Activated CD4-positive, alpha-beta T cell treated with anti-CD3 and anti-CD28 coated beads for 36 hours (primary cell): ENCODE measurements at regions of chr2 and their contacts with region 1.

Region 1: GRCh38 chr2:96265840-96266679 is at the starts of genes CIAO1 and TMEM127:
- DNase-seq: peak; percentile 99
- ATAC-seq: peak; percentile 94
- H3K4me3 Mint-ChIP-seq: peak within 1 kb of the TSS; percentile 99
- H3K27ac Mint-ChIP-seq: peak within 1 kb of the TSS; percentile 99
- H3K4me1 Mint-ChIP-seq: peaks cover 57% of the 10 kb centered on the region
- H3K27me3 Mint-ChIP-seq: no peaks in the 10 kb centered on the region
- total RNA-seq, gene CIAO1: 72.1 to 77.6 TPM
- total RNA-seq, gene TMEM127: 16.6 to 17.9 TPM

Region 2: GRCh38 chr2:96145036-96145847 is 120.8 kb before region 1 on chr2 and contains the start of gene DUSP2:
- CTCF ChIA-PET with region 1: interaction called, 4 read pairs
- POLR2A ChIA-PET with region 1: no interaction called
- intact Hi-C with region 1: loop called (anchors 1 to 2 kb)
- DNase-seq: peak; percentile 97
- ATAC-seq: peak; percentile 45
- H3K4me3 Mint-ChIP-seq: peak within 1 kb of the TSS; percentile 97
- H3K27ac Mint-ChIP-seq: peak within 1 kb of the TSS; percentile 99
- H3K4me1 Mint-ChIP-seq: peaks cover 57% of the 10 kb centered on the region
- H3K27me3 Mint-ChIP-seq: no peaks in the 10 kb centered on the region
- total RNA-seq, gene DUSP2: 248 to 407 TPM

Region 3: DNA sequence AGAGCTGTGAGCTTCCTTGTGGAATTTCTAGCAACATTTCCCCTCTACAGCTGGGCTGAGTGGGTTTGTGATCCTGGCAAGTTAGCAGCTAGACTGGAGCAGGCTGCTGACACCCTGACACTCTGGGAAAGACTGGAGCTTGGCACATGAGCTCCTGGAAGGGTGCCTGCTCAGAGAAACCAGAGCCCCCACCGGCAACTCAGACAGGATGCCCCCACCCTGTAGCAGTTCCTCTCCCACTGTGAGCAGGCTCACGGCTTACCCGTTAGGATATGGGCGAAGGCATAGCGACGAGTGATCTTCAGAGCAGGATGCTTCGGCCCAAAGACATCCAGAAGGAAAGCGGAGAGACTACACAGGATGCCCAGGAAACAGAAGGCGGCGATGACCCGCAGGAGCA is 11.5 kb before region 1 on chr2:
- CTCF ChIA-PET with region 1: interaction called, 12 read pairs
- POLR2A ChIA-PET with region 1: interaction called, 3 read pairs
- intact Hi-C with region 1: no loop called
- DNase-seq: no peak
- ATAC-seq: no peak
- H3K4me3 Mint-ChIP-seq: no peak overlapping the region
- H3K27ac Mint-ChIP-seq: peak overlapping the region; percentile 29
- H3K4me1 Mint-ChIP-seq: peaks cover 42% of the 10 kb centered on the region
- H3K27me3 Mint-ChIP-seq: no peaks in the 10 kb centered on the region

Region 4: DNA sequence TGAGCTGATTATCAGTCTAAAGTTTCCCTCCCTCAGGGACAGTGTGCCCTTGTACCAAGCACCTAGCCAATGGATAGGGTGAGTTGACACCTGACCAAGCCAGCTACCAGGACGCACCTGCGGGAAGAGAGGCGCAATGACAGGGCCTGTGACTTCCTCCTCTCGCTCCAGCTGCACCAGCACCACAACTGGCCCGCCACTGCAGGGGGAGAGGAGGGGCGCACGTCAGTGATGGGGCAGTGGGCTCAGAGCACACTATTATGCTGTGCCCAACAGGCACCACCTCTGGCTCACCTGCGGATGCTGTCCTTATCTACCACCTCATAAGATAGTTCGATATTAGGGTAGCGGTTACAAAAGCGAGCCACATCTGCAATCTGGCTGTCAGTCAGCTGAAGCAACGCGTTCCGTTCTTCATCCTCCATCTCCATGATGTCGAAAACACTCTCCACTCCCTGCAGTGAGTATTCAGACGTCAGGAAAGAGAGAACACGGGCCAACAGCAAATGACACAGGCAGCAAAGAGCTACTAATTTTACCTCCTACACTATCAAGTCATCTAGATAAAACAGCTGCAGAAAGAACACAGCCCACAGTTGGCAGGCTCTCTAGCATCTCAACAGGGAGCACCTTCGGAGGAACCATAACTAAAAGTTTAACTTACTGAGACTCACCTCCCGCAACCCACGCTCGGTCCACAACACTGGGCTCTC is 10.9 kb after region 1 on chr2:
- CTCF ChIA-PET with region 1: no interaction called
- POLR2A ChIA-PET with region 1: no interaction called
- intact Hi-C with region 1: no loop called
- DNase-seq: no peak
- ATAC-seq: no peak
- H3K4me3 Mint-ChIP-seq: no peak overlapping the region
- H3K27ac Mint-ChIP-seq: no peak overlapping the region
- H3K4me1 Mint-ChIP-seq: no peaks in the 10 kb centered on the region
- H3K27me3 Mint-ChIP-seq: no peaks in the 10 kb centered on the region

Region 5: DNA sequence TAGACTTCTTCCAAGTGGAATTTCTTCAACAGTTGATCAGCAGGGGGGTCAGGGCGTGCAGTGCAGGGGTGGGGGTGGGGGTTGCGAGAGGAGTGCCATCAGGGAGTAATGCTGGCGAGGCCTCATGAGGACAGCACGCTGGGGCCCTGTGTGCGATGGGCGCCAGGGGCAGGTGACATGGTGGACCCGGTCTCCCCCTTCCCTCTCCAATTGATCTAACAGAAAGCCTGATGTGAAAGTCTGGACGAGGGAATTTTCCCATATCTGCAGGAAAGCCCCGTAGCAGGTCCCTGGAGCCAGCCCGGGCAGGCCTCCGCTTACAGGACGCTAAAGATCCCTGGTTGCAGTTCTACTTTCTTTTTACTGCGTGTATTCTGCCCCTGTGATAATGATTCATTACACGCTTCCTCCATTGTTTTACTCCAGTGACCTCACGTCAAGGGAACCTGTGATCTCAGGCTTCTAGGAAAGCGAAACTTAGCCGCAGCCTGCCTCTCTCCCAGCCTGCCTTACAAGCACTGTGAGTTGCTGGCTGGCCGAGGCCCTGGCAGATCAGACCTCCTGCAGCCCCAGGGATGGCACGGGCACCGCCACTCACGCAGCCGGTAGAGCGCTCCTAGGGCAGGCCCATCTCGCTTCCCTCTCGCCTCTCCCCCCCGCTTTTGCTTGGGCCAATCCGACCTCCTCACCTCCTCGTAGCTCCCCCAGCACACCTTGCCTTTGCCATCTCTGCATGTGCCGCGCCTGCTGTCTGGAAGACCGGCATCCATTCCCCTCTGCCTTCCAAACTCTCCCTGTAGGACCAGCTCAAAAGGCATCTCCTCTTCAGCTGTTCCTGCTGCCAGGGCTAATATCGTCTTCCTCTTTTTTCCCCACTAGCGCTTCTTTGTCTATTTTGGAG is 219.9 kb after region 1 on chr2:
- CTCF ChIA-PET with region 1: no interaction called
- POLR2A ChIA-PET with region 1: no interaction called
- intact Hi-C with region 1: loop called in 1 of 2 experiments (anchors 2 kb)
- DNase-seq: peak; percentile 94
- ATAC-seq: peak; percentile 95
- H3K4me3 Mint-ChIP-seq: peak overlapping the region; percentile 90
- H3K27ac Mint-ChIP-seq: peak overlapping the region; percentile 95
- H3K4me1 Mint-ChIP-seq: peaks cover 48% of the 10 kb centered on the region
- H3K27me3 Mint-ChIP-seq: no peaks in the 10 kb centered on the region

Region 6: GRCh38 chr2:96565111-96565510 is 299.1 kb after region 1 on chr2:
- CTCF ChIA-PET with region 1: no interaction called
- POLR2A ChIA-PET with region 1: no interaction called
- intact Hi-C with region 1: no loop called
- DNase-seq: no peak
- ATAC-seq: no peak
- H3K4me3 Mint-ChIP-seq: no peak overlapping the region
- H3K27ac Mint-ChIP-seq: no peak overlapping the region
- H3K4me1 Mint-ChIP-seq: no peaks in the 10 kb centered on the region
- H3K27me3 Mint-ChIP-seq: no peaks in the 10 kb centered on the region

Region 7: GRCh38 chr2:96739633-96740428 is 473.8 kb after region 1 on chr2 and contains the start of gene LMAN2L:
- CTCF ChIA-PET with region 1: no interaction called
- POLR2A ChIA-PET with region 1: no interaction called
- intact Hi-C with region 1: loop called in 1 of 2 experiments (anchors 1 kb)
- DNase-seq: peak; percentile 98
- ATAC-seq: peak; percentile 100
- H3K4me3 Mint-ChIP-seq: peak within 1 kb of the TSS; percentile 98
- H3K27ac Mint-ChIP-seq: peak within 1 kb of the TSS; percentile 84
- H3K4me1 Mint-ChIP-seq: peaks cover 40% of the 10 kb centered on the region
- H3K27me3 Mint-ChIP-seq: no peaks in the 10 kb centered on the region
- total RNA-seq, gene LMAN2L: 4.8 to 5.7 TPM

Region 8: GRCh38 chr2:97663965-97664635 is 1398.0 kb after region 1 on chr2 and contains the start of gene ACTR1B:
- CTCF ChIA-PET with region 1: no interaction called
- POLR2A ChIA-PET with region 1: no interaction called
- intact Hi-C with region 1: loop called in 1 of 2 experiments (anchors 10 kb)
- DNase-seq: peak; percentile 99
- ATAC-seq: peak; percentile 77
- H3K4me3 Mint-ChIP-seq: peak within 1 kb of the TSS; percentile 88
- H3K27ac Mint-ChIP-seq: peak within 1 kb of the TSS; percentile 95
- H3K4me1 Mint-ChIP-seq: peaks cover 36% of the 10 kb centered on the region
- H3K27me3 Mint-ChIP-seq: no peaks in the 10 kb centered on the region
- total RNA-seq, gene ACTR1B: 92.0 to 124 TPM